Endothelial cell of umbilical vein (primary cell): ENCODE measurements at regions of chr14 and their contacts with region 1.

Region 1: GRCh38 chr14:61475316-61475715 is 153.9 kb downstream of the PRKCH start:
- DNase-seq: peak; percentile 74
- H3K4me3 ChIP-seq: no peak overlapping the region
- H3K27ac ChIP-seq: peak overlapping the region; percentile 100
- H3K4me1 ChIP-seq: peaks cover 78% of the 10 kb centered on the region
- H3K27me3 ChIP-seq: no peaks in the 10 kb centered on the region
- CTCF ChIP-seq: peak; percentile 48 to 53
- POLR2A ChIP-seq: no peak

Region 2: DNA sequence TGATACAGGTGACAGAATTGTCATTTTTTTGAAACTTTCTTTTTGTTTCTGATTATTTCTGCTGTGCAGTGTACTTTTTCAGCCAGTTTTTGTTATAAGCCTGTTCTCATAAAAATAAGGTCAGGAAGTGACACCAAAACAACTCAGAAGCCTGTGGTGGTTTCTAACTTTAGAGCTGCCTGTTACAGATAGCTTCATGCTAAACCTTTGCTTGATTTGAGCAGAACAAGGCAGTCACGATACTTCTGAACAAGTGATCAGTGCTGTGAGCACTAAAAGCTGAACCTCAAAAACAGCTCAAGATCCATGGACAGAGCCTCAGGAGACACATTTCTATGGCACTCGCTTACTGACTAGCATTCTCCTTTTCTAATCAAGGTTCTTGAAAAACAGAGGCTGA is 71.9 kb before region 1 on chr14:
- CTCF ChIA-PET with region 1: no interaction called
- POLR2A ChIA-PET with region 1: no interaction called
- dilution Hi-C with region 1: no loop called
- intact Hi-C with region 1: no loop called
- DNase-seq: peak; percentile 60
- H3K4me3 ChIP-seq: no peak overlapping the region
- H3K27ac ChIP-seq: no peak overlapping the region
- H3K4me1 ChIP-seq: peaks cover 26% of the 10 kb centered on the region
- H3K27me3 ChIP-seq: no peaks in the 10 kb centered on the region
- CTCF ChIP-seq: no peak
- POLR2A ChIP-seq: no peak

Region 3: GRCh38 chr14:61525293-61526011 is 50.1 kb after region 1 on chr14:
- CTCF ChIA-PET with region 1: interaction called, 8 read pairs
- POLR2A ChIA-PET with region 1: interaction called, 8 read pairs
- dilution Hi-C with region 1: no loop called
- intact Hi-C with region 1: loop called (anchors 1 kb)
- DNase-seq: peak; percentile 88
- H3K4me3 ChIP-seq: peak overlapping the region in 1 of 3 experiments; percentile 6
- H3K27ac ChIP-seq: peak overlapping the region; percentile 89
- H3K4me1 ChIP-seq: peaks cover 55% of the 10 kb centered on the region
- H3K27me3 ChIP-seq: no peaks in the 10 kb centered on the region
- CTCF ChIP-seq: no peak
- POLR2A ChIP-seq: no peak

Region 4: DNA sequence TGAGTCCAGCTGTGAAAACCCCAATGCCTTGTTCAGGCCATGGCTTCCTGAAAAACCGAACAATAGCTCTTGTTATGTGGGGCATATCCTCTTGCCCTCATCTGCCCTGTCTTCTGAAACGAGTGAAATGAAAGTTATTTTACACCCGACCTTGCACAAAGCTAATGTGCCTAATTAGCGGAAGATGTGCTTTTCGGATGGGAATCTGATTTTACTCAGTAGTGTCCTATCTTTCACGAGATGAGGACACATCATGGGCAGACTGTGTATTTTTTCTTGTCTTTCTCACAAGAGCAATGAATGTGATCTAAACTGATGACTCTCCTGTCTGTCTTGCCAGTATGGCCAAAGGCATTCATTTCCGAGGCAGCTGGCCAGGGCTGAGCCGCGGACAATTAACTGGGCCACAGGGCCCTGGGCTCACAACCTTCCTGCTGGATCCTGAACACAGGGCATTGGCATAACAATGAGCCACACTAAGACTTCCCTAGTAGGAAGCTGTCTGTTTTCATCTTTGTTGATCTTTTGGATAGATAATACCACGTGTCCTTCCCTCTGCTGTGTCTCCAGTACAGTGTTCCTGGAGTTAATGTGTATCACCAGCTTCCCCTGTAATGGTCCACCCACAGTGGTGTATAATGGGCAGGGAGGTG is 134.0 kb after region 1 on chr14:
- CTCF ChIA-PET with region 1: interaction called, 6 read pairs
- POLR2A ChIA-PET with region 1: no interaction called
- dilution Hi-C with region 1: no loop called
- intact Hi-C with region 1: loop called (anchors 2 kb)
- DNase-seq: peak; percentile 87
- H3K4me3 ChIP-seq: peak overlapping the region in 1 of 3 experiments; percentile 3
- H3K27ac ChIP-seq: peak overlapping the region; percentile 74
- H3K4me1 ChIP-seq: peaks cover 24% of the 10 kb centered on the region
- H3K27me3 ChIP-seq: no peaks in the 10 kb centered on the region
- CTCF ChIP-seq: no peak
- POLR2A ChIP-seq: no peak

Region 5: GRCh38 chr14:61719344-61720293 is 244.3 kb after region 1 on chr14:
- CTCF ChIA-PET with region 1: interaction called, 16 read pairs
- POLR2A ChIA-PET with region 1: no interaction called
- dilution Hi-C with region 1: no loop called
- intact Hi-C with region 1: loop called (anchors 5 kb)
- DNase-seq: peak; percentile 55
- H3K4me3 ChIP-seq: no peak overlapping the region
- H3K27ac ChIP-seq: peak overlapping the region; percentile 14
- H3K4me1 ChIP-seq: peaks cover 17% of the 10 kb centered on the region
- H3K27me3 ChIP-seq: no peaks in the 10 kb centered on the region
- CTCF ChIP-seq: no peak
- POLR2A ChIP-seq: no peak

Region 6: GRCh38 chr14:61837336-61838229 is 362.3 kb after region 1 on chr14:
- CTCF ChIA-PET with region 1: interaction called, 42 read pairs
- POLR2A ChIA-PET with region 1: no interaction called
- dilution Hi-C with region 1: no loop called
- intact Hi-C with region 1: loop called (anchors 1 kb)
- DNase-seq: peak; percentile 84
- H3K4me3 ChIP-seq: no peak overlapping the region
- H3K27ac ChIP-seq: peak overlapping the region; percentile 72
- H3K4me1 ChIP-seq: peaks cover 34% of the 10 kb centered on the region
- H3K27me3 ChIP-seq: no peaks in the 10 kb centered on the region
- CTCF ChIP-seq: peak; percentile 85
- POLR2A ChIP-seq: no peak